ENCODE measurements at regions of chr15 and their contacts with region 1.

Region 1: GRCh38 chr15:83248151-83249029 is 36.1 kb downstream of the BNC1 start:
- DNase-seq: no peak
- ATAC-seq: peak in 1 of 2 donors; percentile 61
- H3K4me3 ChIP-seq: no peak overlapping the region
- H3K27ac ChIP-seq: no peak overlapping the region
- H3K4me1 ChIP-seq: no peaks in the 10 kb centered on the region
- H3K27me3 ChIP-seq: peaks cover 5 to 22% (median 9%) of the 10 kb centered on the region in 3 donors
- CTCF ChIP-seq: peak; percentile 67 to 89 (median 71)
- POLR2A ChIP-seq: no peak

Region 2: GRCh38 chr15:82663186-82663600 is 585.2 kb before region 1 on chr15:
- in situ Hi-C with region 1: no loop called
- intact Hi-C with region 1: no loop called
- DNase-seq: no peak
- ATAC-seq: no peak
- H3K4me3 ChIP-seq: no peak overlapping the region
- H3K27ac ChIP-seq: no peak overlapping the region
- H3K4me1 ChIP-seq: no peaks in the 10 kb centered on the region
- H3K27me3 ChIP-seq: no peaks in the 10 kb centered on the region
- CTCF ChIP-seq: no peak
- POLR2A ChIP-seq: no peak

Region 3: GRCh38 chr15:82855286-82856100 is 392.9 kb before region 1 on chr15:
- in situ Hi-C with region 1: no loop called
- intact Hi-C with region 1: no loop called
- DNase-seq: no peak
- ATAC-seq: no peak
- H3K4me3 ChIP-seq: no peak overlapping the region
- H3K27ac ChIP-seq: peak overlapping the region in 1 of 4 donors; percentile 18
- H3K4me1 ChIP-seq: no peaks in the 10 kb centered on the region
- H3K27me3 ChIP-seq: no peaks in the 10 kb centered on the region
- CTCF ChIP-seq: no peak
- POLR2A ChIP-seq: no peak

Region 4: GRCh38 chr15:83192742-83193141 is 55.6 kb before region 1 on chr15:
- in situ Hi-C with region 1: no loop called
- intact Hi-C with region 1: no loop called
- DNase-seq: no peak
- ATAC-seq: no peak
- H3K4me3 ChIP-seq: no peak overlapping the region
- H3K27ac ChIP-seq: no peak overlapping the region
- H3K4me1 ChIP-seq: peaks cover 0 to 7% of the 10 kb centered on the region in 2 donors
- H3K27me3 ChIP-seq: no peaks in the 10 kb centered on the region
- CTCF ChIP-seq: no peak
- POLR2A ChIP-seq: no peak

Region 5: DNA sequence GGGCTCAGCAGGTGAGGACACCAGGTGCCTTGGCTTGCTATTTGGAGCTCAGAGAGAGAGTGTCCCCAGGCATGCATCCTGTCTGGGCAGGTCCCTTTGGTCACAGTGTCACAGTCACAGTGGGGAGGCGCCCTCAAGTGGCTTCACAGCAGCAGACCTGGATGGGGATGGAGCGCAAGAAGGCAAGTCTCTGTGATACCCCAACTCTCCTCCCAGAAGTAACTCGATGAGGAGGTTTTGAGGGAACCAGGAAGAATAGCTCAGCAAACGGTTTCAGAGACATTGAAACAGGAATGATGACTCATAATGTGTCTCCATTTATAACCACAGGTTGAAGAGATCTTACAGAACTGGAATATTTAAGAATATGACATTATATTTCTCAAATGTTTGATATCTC is 132.3 kb after region 1 on chr15:
- in situ Hi-C with region 1: no loop called
- intact Hi-C with region 1: loop called (anchors 2 kb)
- DNase-seq: no peak
- ATAC-seq: no peak
- H3K4me3 ChIP-seq: no peak overlapping the region
- H3K27ac ChIP-seq: no peak overlapping the region
- H3K4me1 ChIP-seq: no peaks in the 10 kb centered on the region
- H3K27me3 ChIP-seq: peaks cover 29 to 34% (median 31%) of the 10 kb centered on the region in 3 donors
- CTCF ChIP-seq: no peak
- POLR2A ChIP-seq: no peak

Measured in gastrocnemius medialis (tissue), 4 donors.